ENCODE measurements at regions of chr1 and their contacts with region 1.

Region 1: GRCh38 chr1:36099681-36100341 is 11.1 kb downstream of the ADPRS start:
- DNase-seq: peak in 1 of 2 donors; percentile 88
- H3K4me3 ChIP-seq: no peak overlapping the region
- H3K27ac ChIP-seq: peak overlapping the region in 1 of 2 donors; percentile 37
- H3K4me1 ChIP-seq: peaks cover 0 to 10% of the 10 kb centered on the region in 2 donors
- H3K27me3 ChIP-seq: no peaks in the 10 kb centered on the region
- CTCF ChIP-seq: peak; percentile 74 to 85 (median 81)

Region 2: DNA sequence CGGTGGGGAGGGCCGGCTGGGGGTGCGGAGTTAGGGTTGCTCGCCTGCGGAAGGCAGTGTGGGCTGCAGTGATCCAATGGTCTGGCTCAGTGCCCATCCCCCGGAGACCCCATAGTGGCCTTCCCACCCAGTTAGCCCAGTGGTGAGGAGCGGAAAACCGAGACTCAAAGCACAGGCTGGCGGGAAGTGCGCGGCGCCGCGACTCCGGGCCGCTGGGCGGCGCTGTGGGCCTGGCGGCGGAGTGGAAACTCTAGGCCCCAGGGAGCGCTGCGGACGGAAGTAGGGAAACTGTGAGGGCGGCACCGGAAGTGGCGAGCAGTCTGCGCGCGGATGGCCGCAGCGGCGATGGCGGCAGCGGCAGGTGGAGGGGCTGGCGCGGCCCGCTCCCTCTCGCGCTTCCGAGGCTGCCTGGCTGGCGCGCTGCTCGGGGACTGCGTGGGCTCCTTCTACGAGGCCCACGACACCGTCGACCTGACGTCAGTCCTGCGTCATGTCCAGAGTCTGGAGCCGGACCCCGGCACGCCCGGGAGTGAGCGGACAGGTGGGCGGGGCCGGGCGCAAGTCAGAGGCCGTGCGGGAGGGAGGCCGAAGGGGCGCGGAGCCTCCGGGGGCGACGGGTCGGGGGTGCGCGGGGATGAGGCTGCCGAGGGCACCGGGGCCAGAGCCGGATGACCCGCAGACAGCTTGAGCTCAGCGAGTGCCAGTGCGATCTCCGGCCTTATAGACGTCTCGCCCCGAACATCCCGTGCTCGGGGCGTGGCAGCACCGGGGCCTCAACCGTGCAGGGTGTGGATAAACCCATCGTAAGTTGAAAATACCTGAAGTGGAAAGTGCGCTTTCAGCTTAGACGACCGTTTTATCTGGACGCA is 11.0 kb before region 1 on chr1 and contains the start of gene ADPRS:
- intact Hi-C with region 1: no loop called
- DNase-seq: peak in 1 of 2 donors; percentile 92
- H3K4me3 ChIP-seq: peak within 1 kb of the TSS; percentile 62 to 88
- H3K27ac ChIP-seq: peak within 1 kb of the TSS; percentile 71 to 85
- H3K4me1 ChIP-seq: peaks cover 12 to 23% of the 10 kb centered on the region in 2 donors
- H3K27me3 ChIP-seq: no peaks in the 10 kb centered on the region
- CTCF ChIP-seq: peak; percentile 98 to 99 (median 99)
- total RNA-seq, gene ADPRS: 69.3 TPM

Region 3: GRCh38 chr1:36134505-36135329 is 34.9 kb after region 1 on chr1:
- intact Hi-C with region 1: loop called (anchors 1 kb)
- DNase-seq: peak in 1 of 2 donors; percentile 81
- H3K4me3 ChIP-seq: no peak overlapping the region
- H3K27ac ChIP-seq: peak overlapping the region; percentile 85 to 91
- H3K4me1 ChIP-seq: peaks cover 8 to 28% of the 10 kb centered on the region in 2 donors
- H3K27me3 ChIP-seq: no peaks in the 10 kb centered on the region
- CTCF ChIP-seq: peak; percentile 75 to 85 (median 77)

Region 4: DNA sequence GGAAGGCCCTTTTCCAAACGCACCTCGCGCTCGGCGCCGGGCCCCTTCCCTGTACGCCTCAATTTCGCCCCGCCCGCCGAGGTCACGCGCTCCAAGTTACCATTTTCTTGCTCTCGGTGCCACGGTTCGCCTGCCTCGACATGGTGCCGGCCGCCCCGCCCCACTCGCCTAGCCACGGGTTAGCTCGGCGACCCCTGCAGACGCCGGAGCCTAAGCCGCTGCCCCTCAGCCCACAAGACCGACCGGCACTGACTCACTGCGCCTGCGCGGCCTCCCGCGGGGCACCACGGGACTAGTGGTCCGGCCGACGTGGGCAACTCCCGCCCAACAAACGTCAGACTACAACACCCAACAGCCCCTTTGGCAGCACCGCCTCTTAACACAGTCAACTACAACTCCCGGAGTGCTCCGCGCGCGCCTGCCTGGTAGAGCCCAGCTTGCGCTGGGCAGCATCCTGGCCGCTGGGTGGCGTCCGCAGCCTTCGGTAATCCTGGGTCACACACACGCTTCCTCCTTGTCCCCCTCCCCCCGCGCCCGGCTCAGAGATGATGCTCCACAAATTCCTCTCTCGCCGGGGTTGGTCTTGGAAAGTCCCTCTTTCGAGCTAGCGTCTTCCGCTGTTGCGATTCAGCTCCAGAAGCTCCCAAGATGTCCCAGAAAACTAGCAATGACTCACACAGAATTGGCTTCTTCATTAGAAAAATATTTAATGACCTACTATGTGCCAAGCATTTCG is 49.6 kb after region 1 on chr1 and contains the start of gene TRAPPC3:
- intact Hi-C with region 1: loop called (anchors 1 kb)
- DNase-seq: peak; percentile 100
- H3K4me3 ChIP-seq: peak within 1 kb of the TSS; percentile 71 to 77
- H3K27ac ChIP-seq: peak within 1 kb of the TSS; percentile 93 to 98
- H3K4me1 ChIP-seq: peaks cover 26 to 36% of the 10 kb centered on the region in 2 donors
- H3K27me3 ChIP-seq: no peaks in the 10 kb centered on the region
- CTCF ChIP-seq: peak; percentile 88 to 98 (median 95)
- total RNA-seq, gene TRAPPC3: 52.0 TPM

Region 5: GRCh38 chr1:36160949-36161485 is 61.2 kb after region 1 on chr1:
- intact Hi-C with region 1: no loop called
- DNase-seq: peak in 1 of 2 donors; percentile 84
- H3K4me3 ChIP-seq: peak overlapping the region; percentile 41 to 63
- H3K27ac ChIP-seq: peak overlapping the region; percentile 90 to 100
- H3K4me1 ChIP-seq: peaks cover 36 to 47% of the 10 kb centered on the region in 2 donors
- H3K27me3 ChIP-seq: no peaks in the 10 kb centered on the region
- CTCF ChIP-seq: peak in 1 of 3 experiments; percentile 39

Region 6: DNA sequence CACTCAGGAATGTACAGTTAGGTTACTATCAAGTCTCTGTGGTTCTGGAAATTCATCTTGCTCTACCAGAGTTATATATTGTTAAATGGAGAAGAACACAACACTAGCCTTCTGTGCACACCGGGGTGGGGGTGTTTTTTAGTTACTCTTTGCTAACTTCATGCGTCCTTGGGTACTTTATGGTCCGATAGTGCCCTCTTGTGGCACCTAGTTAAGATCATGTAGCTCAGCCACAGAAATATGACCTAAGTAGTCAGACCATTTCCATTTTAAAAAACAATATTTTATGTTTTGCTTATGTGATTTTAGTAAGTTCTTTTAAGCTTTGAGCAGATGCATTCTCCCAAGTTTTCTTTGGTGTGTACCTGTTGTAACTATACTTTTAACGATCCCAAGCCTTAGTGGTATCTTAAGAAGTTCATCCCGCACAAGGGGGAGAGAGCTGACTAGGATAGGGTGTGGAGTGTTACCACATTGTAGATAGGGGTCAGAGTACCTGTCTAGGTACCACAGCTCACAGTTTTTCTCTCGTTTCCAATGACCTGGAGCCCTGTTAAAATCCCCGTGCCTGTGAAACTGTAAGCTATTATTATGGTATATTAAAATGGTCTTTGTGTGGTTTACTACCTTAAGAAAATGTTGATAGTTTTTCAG is 185.8 kb after region 1 on chr1:
- intact Hi-C with region 1: loop called (anchors 1 kb)
- DNase-seq: peak in 1 of 2 donors; percentile 86
- H3K4me3 ChIP-seq: no peak overlapping the region
- H3K27ac ChIP-seq: peak overlapping the region in 1 of 2 donors; percentile 20
- H3K4me1 ChIP-seq: peaks cover 3 to 4% of the 10 kb centered on the region in 2 donors
- H3K27me3 ChIP-seq: no peaks in the 10 kb centered on the region
- CTCF ChIP-seq: peak; percentile 63 to 71 (median 70)

Region 7: DNA sequence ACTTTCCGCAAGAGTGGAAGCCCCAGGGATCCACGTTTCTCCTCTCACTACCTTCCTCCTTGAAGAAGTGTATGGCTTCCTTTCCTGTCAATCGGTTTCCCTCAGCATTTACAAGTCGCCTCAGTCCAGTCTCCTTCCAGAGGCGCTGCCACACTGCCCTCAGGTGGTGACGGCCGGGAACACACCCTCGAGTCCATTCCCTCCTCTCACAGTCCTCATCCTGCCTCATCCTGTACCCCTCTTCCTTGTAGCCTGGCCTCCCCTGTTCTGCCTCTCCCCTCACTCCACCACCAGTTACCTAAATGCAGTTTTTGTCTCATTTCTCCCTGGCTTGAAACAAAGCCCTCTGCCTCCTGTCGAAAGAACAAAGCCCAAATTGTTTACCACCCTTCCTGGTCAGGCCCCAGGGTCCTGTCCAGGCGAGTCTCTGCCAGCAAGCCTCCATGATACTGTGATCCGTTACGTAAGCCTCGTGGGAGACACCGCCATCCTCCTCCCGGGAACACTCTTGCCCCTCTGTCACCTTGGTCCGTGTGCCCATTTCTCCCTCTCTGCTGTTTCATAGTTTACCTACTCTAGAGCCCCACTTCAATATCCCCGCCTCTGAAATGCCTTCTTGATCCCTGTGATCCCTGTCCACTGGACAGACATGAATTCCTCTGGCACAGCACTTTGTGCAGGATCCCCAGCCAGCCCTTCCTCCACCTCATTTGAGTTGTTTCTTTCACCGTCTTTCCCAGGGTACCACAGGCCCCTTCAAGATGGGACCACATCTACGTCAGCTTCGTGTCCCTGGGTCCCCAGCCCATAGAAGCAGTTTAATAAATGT is 321.2 kb after region 1 on chr1:
- intact Hi-C with region 1: loop called (anchors 2 kb)
- DNase-seq: peak; percentile 58 to 94
- H3K4me3 ChIP-seq: no peak overlapping the region
- H3K27ac ChIP-seq: peak overlapping the region; percentile 1 to 24
- H3K4me1 ChIP-seq: no peaks in the 10 kb centered on the region
- H3K27me3 ChIP-seq: no peaks in the 10 kb centered on the region
- CTCF ChIP-seq: peak; percentile 86 to 94 (median 92)

Measured in ascending aorta (tissue), 2 donors.